HepG2 (cell line): ENCODE measurements at regions of chr2 and their contacts with region 1.

Region 1: GRCh38 chr2:203225423-203226039 is 13.3 kb upstream of the CYP20A1 start:
- DNase-seq: peak; percentile 35
- ATAC-seq: peak; percentile 90
- H3K4me3 ChIP-seq: no peak overlapping the region
- H3K27ac ChIP-seq: no peak overlapping the region
- H3K4me1 ChIP-seq: peaks cover 27% of the 10 kb centered on the region
- H3K27me3 ChIP-seq: no peaks in the 10 kb centered on the region
- CTCF ChIP-seq: peak; percentile 75
- EP300 ChIP-seq: no peak
- POLR2A ChIP-seq: no peak
- RAD21 ChIP-seq: peak; percentile 70

Region 2: GRCh38 chr2:202577250-202578183 is 648.0 kb before region 1 on chr2:
- CTCF ChIA-PET with region 1: no interaction called
- POLR2A ChIA-PET with region 1: no interaction called
- in situ Hi-C with region 1: no loop called
- intact Hi-C with region 1: loop called (anchors 10 kb)
- DNase-seq: peak; percentile 62
- ATAC-seq: peak; percentile 70
- H3K4me3 ChIP-seq: peak overlapping the region in 2 of 3 experiments; percentile 9 to 51; a peak in 1 of 6 replicates
- H3K27ac ChIP-seq: peak overlapping the region; percentile 77
- H3K4me1 ChIP-seq: peaks cover 31% of the 10 kb centered on the region
- H3K27me3 ChIP-seq: no peaks in the 10 kb centered on the region
- CTCF ChIP-seq: no peak
- EP300 ChIP-seq: peak in 1 of 2 experiments; percentile 33; a peak in 1 of 4 replicates
- POLR2A ChIP-seq: no peak
- RAD21 ChIP-seq: 0 out of 2 replicates have a peak, but pooled peaks have one; percentile 16

Region 3: DNA sequence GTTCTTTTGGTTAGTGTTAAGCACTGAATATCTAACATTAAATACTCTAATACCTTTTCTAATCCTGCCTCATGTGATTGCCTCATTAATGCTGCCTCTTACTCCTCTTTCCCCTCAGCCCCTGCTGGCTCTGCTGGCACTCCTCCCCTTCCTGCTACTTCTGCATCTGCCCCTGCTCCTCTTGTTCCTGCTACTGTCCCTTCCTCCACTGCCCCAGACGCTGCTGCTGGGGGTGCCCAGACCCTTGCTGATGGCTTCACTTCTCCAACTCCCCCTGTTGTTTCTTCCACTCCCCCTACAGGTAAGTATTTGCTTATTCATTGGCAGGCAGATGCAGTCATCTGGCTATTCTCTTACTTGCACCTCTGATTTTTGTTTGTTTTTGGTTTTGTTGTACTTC is 171.1 kb after region 1 on chr2:
- CTCF ChIA-PET with region 1: no interaction called
- POLR2A ChIA-PET with region 1: no interaction called
- in situ Hi-C with region 1: no loop called
- intact Hi-C with region 1: loop called (anchors 10 kb)
- DNase-seq: peak; percentile 31
- ATAC-seq: peak; percentile 85
- H3K4me3 ChIP-seq: no peak overlapping the region
- H3K27ac ChIP-seq: no peak overlapping the region
- H3K4me1 ChIP-seq: no peaks in the 10 kb centered on the region
- H3K27me3 ChIP-seq: no peaks in the 10 kb centered on the region; a peak in 1 of 5 replicates
- CTCF ChIP-seq: peak; percentile 49
- EP300 ChIP-seq: no peak
- POLR2A ChIP-seq: no peak
- RAD21 ChIP-seq: 0 out of 2 replicates have a peak, but pooled peaks have one; percentile 18

Region 4: DNA sequence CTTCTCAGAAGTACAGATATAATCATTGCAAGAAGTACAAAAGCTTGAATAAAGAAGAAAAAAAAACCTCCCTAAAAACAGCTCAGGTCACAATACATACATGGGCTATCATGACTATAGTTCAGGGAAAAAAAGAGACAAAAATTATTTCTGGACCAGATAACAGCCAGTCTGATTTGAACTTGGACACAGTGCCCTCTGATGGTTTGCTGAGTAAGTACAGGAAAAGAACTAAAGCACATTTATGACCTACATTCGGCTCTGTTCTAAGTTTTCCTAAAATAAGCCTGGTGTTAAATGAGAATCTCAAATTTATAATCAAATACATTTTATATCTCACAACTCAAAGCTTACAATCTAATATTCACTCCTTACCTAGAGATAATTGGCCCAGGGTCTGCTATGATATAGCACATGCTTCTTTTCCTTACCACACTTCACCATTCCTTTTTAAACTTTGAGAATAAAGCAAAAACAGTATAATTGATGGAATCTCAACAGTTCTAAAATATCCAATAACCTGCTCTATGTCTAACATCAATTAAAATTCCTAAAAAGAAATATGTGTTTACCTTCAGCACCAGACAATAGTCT is 228.4 kb after region 1 on chr2:
- CTCF ChIA-PET with region 1: interaction called, 10 read pairs
- POLR2A ChIA-PET with region 1: no interaction called
- in situ Hi-C with region 1: loop called (anchors 10 kb)
- intact Hi-C with region 1: loop called (anchors 1 kb)
- DNase-seq: peak; percentile 61
- ATAC-seq: peak; percentile 89
- H3K4me3 ChIP-seq: no peak overlapping the region
- H3K27ac ChIP-seq: no peak overlapping the region
- H3K4me1 ChIP-seq: peaks cover 7% of the 10 kb centered on the region; the same call in 1 of the 2 replicates
- H3K27me3 ChIP-seq: no peaks in the 10 kb centered on the region
- CTCF ChIP-seq: peak; percentile 78
- EP300 ChIP-seq: no peak
- POLR2A ChIP-seq: no peak
- RAD21 ChIP-seq: 0 out of 2 replicates have a peak, but pooled peaks have one; percentile 47

Region 5: GRCh38 chr2:203909261-203909967 is 683.9 kb after region 1 on chr2:
- CTCF ChIA-PET with region 1: interaction called, 3 read pairs
- POLR2A ChIA-PET with region 1: no interaction called
- in situ Hi-C with region 1: loop called (anchors 10 kb)
- intact Hi-C with region 1: loop called (anchors 1 kb)
- DNase-seq: peak; percentile 41
- ATAC-seq: peak; percentile 92
- H3K4me3 ChIP-seq: peak overlapping the region in 1 of 3 experiments; percentile 9; a peak in 2 of 6 replicates
- H3K27ac ChIP-seq: no peak overlapping the region
- H3K4me1 ChIP-seq: peaks cover 20% of the 10 kb centered on the region; the same call in 1 of the 2 replicates
- H3K27me3 ChIP-seq: no peaks in the 10 kb centered on the region
- CTCF ChIP-seq: peak; percentile 74
- EP300 ChIP-seq: no peak
- POLR2A ChIP-seq: no peak
- RAD21 ChIP-seq: peak; percentile 75; the same call in 1 of the 2 replicates